Upper lobe of right lung (tissue), 1 donor: ENCODE measurements at regions of chr4 and their contacts with region 1.

Region 1: GRCh38 chr4:2923141-2923551 is 40.1 kb downstream of the NOP14 start:
- DNase-seq: peak; percentile 66
- ATAC-seq: peak; percentile 26
- H3K4me3 ChIP-seq: no peak overlapping the region
- H3K27ac ChIP-seq: no peak overlapping the region
- H3K4me1 ChIP-seq: peaks cover 18% of the 10 kb centered on the region
- H3K27me3 ChIP-seq: no peaks in the 10 kb centered on the region
- CTCF ChIP-seq: no peak

Region 2: DNA sequence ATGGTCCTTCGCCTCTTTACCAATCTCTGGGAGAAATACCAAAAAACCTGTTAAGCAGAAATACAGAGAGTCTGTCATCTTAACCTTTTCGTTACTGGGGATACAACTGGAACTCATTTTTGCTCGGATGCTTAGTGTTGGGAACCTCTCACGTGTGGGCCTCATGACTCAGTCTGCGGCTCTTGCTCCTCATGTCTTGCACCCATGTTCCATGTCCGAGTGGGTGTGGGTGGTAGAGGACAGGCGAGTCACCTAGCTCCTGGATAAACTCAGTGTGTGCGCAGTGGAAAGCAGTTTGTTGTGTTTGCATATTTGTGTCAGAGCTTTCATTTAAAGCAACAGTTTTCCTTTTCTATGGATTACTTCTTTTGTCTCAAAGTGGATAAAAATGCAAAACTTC is 237.6 kb before region 1 on chr4:
- intact Hi-C with region 1: no loop called
- DNase-seq: no peak
- ATAC-seq: no peak
- H3K4me3 ChIP-seq: no peak overlapping the region
- H3K27ac ChIP-seq: no peak overlapping the region
- H3K4me1 ChIP-seq: no peaks in the 10 kb centered on the region
- H3K27me3 ChIP-seq: no peaks in the 10 kb centered on the region
- CTCF ChIP-seq: no peak

Region 3: DNA sequence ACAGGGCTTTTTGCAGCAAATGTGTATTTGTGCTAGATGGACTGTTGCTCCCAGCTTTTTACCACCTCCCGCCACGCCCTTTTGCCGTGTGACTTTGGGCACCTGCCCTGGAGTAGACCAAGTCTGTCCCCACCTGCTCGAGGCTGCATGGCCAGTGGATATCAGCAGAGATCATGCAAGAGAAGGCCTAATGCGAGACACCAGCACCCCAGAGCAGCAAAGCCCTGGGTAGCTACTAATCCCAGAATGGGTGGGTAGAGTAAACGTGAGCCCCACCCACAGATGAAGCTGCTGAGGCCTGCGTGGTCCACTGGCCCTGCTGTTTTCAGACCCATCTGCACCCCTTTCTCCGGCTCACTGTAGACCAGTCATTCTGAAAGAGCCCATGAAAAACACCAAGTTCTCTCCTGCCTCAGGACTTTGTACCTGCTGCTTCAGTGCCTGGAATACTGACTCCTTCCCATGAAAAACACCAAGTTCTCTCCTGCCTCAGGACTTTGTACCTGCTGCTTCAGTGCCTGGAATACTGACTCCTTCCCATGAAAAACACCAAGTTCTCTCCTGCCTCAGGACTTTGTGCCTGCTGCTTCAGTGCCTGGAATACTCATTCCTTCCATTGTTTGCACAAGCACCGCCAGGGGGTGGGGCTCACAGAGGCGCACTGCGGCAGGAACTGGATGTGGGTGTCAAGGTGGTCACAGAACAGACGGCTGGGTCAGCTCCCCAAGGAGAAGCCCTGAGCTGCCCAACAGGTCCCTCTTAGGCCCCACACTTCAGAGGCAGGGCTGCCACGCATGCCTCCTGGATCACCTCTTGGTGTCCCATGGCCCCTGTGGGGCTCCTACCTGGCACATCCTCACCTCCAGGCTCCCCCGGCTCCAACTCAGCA is 161.9 kb before region 1 on chr4:
- intact Hi-C with region 1: loop called (anchors 10 kb)
- DNase-seq: peak; percentile 78
- ATAC-seq: peak; percentile 30
- H3K4me3 ChIP-seq: no peak overlapping the region
- H3K27ac ChIP-seq: no peak overlapping the region
- H3K4me1 ChIP-seq: no peaks in the 10 kb centered on the region
- H3K27me3 ChIP-seq: no peaks in the 10 kb centered on the region
- CTCF ChIP-seq: no peak

Region 4: DNA sequence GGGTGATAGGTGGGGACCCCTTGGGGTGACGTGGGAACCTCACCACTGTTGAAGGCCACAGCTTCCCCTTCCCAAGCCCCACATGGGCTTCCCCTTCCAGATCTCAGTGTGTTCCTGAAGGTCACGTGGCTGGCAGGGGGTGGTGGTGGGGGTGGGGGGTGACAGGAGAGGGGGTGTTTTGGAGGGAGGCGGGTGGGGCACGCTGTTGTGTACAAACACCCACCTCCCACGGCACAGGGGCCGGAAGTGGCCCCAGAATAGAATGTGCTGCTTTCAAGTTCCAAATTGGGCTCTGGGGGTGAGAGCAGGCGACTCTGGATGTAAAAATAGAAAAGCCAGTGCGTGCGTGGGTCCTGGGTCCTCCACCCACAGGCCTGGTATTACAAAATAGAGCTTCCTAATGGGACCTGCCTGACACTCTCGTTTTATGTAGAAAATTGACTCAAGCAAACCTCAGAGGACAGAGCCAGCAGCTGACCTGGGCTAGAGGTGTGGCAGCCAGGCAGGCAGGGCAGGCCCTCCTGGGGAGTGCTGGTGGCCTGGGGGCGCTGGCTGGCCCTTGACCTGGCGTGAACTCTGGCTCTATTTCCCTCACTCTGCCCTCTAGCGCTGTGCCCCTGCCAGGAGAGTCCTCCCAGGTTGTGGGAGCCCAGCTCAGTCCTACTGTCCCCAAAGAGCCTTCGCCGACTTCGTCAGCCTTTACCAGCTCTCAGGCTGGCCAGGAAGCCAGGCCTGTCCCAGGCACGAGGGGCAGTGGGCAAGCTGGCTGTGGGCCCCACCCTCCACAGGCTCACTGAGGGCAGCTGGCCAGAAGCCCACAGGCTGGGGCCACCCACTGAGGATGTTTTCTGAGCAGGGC is 135.7 kb before region 1 on chr4:
- intact Hi-C with region 1: no loop called
- DNase-seq: peak; percentile 75
- ATAC-seq: peak; percentile 61
- H3K4me3 ChIP-seq: no peak overlapping the region
- H3K27ac ChIP-seq: peak overlapping the region; percentile 28
- H3K4me1 ChIP-seq: peaks cover 28% of the 10 kb centered on the region
- H3K27me3 ChIP-seq: no peaks in the 10 kb centered on the region
- CTCF ChIP-seq: no peak

Region 5: GRCh38 chr4:3041192-3042142 is 118.3 kb after region 1 on chr4:
- intact Hi-C with region 1: no loop called
- DNase-seq: peak; percentile 86
- ATAC-seq: peak; percentile 87
- H3K4me3 ChIP-seq: peak overlapping the region; percentile 60
- H3K27ac ChIP-seq: peak overlapping the region; percentile 91
- H3K4me1 ChIP-seq: peaks cover 32% of the 10 kb centered on the region
- H3K27me3 ChIP-seq: no peaks in the 10 kb centered on the region
- CTCF ChIP-seq: no peak

Region 6: GRCh38 chr4:3062471-3062870 is 139.3 kb after region 1 on chr4:
- intact Hi-C with region 1: no loop called
- DNase-seq: no peak
- ATAC-seq: peak; percentile 67
- H3K4me3 ChIP-seq: no peak overlapping the region
- H3K27ac ChIP-seq: no peak overlapping the region
- H3K4me1 ChIP-seq: no peaks in the 10 kb centered on the region
- H3K27me3 ChIP-seq: no peaks in the 10 kb centered on the region
- CTCF ChIP-seq: no peak